HEK293T (cell line): ENCODE measurements at regions of chr17 and their contacts with region 1.

Region 1: GRCh38 chr17:48892940-48893645 is 506 bp downstream of the ATP5MC1 start:
- DNase-seq: no peak

Region 2: DNA sequence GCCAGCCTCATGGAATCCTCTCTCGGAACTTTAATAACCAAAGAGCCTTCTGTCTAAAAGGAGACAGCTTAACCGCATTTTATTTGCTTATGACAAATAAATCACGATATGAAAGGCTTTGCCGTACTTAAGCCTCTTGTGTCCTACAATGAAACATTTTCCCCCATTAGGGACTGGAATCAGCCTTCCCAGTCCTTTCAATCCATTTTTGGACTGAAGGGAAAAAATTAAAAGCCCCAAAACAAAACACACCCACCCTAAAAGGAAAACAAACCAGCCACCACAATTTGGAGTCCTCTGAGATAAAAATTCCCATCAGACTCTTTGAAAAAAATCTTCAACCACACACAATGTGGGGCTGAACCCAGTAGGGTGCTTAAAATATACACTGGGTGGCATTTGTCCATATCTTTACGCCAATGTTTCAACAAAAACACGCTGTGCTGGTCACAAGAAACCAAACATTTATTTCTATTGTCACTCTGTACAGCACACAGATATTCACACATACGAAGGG is 318.0 kb before region 1 on chr17:
- CTCF ChIA-PET with region 1: no interaction called
- POLR2A ChIA-PET with region 1: no interaction called
- DNase-seq: no peak

Region 3: DNA sequence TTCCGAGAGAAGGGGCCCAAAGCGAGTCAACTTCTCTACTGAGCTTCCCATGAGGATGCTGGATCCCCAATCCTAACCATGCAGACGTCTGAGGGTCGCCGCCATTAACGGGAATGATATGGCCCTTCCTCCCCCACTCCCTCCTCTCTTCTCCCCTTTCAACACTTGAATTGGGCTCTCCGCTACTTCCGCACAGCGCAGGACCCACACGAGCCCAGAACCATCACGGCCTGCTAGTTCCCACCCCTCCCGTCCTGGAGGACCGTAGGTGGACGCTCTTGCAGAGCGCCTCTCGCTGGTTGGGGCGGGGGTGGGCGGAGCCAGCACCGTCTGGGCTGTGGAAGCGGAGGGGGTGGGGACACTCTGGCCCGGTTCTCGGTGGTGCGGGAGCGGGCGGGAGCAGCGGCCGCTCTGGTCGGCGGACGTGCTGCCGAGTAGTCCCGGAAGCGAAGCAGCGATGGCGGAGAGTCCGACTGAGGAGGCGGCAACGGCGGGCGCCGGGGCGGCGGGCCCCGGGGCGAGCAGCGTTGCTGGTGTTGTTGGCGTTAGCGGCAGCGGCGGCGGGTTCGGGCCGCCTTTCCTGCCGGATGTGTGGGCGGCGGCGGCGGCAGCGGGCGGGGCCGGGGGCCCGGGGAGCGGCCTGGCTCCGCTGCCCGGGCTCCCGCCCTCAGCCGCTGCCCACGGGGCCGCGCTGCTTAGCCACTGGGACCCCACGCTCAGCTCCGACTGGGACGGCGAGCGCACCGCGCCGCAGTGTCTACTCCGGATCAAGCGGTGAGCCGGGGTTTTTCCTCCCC is 15.2 kb after region 1 on chr17 and contains the start of gene UBE2Z:
- CTCF ChIA-PET with region 1: no interaction called
- POLR2A ChIA-PET with region 1: interaction called, 59 read pairs
- DNase-seq: peak; percentile 95

Region 4: DNA sequence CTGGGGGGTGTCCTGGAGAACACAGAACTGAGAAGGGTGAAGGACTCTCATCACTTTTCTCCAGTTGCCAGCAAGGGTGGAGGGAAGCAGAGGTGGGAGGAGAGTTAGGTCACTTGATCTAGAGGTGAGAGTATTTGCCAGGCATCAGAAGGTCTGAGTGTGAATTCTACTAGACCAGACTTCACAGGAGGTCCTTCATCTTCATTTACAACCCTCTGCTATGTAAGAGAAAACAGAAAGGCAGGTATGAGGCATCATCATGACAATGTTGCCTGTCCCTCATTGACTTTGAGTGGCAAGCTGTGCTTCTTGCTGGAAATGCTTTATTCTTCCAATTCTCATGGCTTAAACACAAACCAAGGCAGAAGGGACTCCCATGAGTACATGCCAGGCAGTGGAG is 193.6 kb after region 1 on chr17:
- CTCF ChIA-PET with region 1: no interaction called
- POLR2A ChIA-PET with region 1: no interaction called
- DNase-seq: no peak